Naive thymus-derived CD4-positive, alpha-beta T cell (primary cell): ENCODE measurements at regions of chr22 and their contacts with region 1.

Region 1: GRCh38 chr22:30591588-30592359 is at the start of gene PES1:
- DNase-seq: peak; percentile 80 to 98 (median 96)
- ATAC-seq: peak; percentile 99
- H3K4me3 ChIP-seq: peak within 1 kb of the TSS; percentile 85
- H3K4me3 Mint-ChIP-seq: no peak within 1 kb of the TSS
- H3K27ac ChIP-seq: peak within 1 kb of the TSS; percentile 85
- H3K27ac Mint-ChIP-seq: no peak within 1 kb of the TSS
- H3K4me1 ChIP-seq: peaks cover 8 to 12% of the 10 kb centered on the region in 2 donors
- H3K4me1 Mint-ChIP-seq: peaks cover 0 to 12% (median 0%) of the 10 kb centered on the region in 7 donors
- H3K27me3 ChIP-seq: no peaks in the 10 kb centered on the region
- H3K27me3 Mint-ChIP-seq: peaks cover 0 to 23% (median 0%) of the 10 kb centered on the region in 5 donors
- total RNA-seq, gene PES1: 40.6 to 84.2 (median 56.3) TPM

Region 2: GRCh38 chr22:29387921-29388758 is 1203.6 kb before region 1 on chr22 and contains the start of gene AP1B1:
- CTCF ChIA-PET with region 1: no interaction called
- POLR2A ChIA-PET with region 1: no interaction called
- intact Hi-C with region 1: loop called in 1 of 2 experiments (anchors 5 kb)
- DNase-seq: peak; percentile 79 to 96 (median 86)
- ATAC-seq: peak; percentile 98
- H3K4me3 ChIP-seq: peak within 1 kb of the TSS; percentile 87
- H3K4me3 Mint-ChIP-seq: peak within 1 kb of the TSS; percentile 91 to 96 (median 94)
- H3K27ac ChIP-seq: peak within 1 kb of the TSS; percentile 73
- H3K27ac Mint-ChIP-seq: peak within 1 kb of the TSS; percentile 87 to 97 (median 90)
- H3K4me1 ChIP-seq: peaks cover 7 to 13% of the 10 kb centered on the region in 2 donors
- H3K4me1 Mint-ChIP-seq: peaks cover 31 to 51% (median 48%) of the 10 kb centered on the region in 7 donors
- H3K27me3 ChIP-seq: no peaks in the 10 kb centered on the region
- H3K27me3 Mint-ChIP-seq: no peaks in the 10 kb centered on the region
- total RNA-seq, gene AP1B1: 38.5 to 77.7 (median 45.8) TPM

Region 3: DNA sequence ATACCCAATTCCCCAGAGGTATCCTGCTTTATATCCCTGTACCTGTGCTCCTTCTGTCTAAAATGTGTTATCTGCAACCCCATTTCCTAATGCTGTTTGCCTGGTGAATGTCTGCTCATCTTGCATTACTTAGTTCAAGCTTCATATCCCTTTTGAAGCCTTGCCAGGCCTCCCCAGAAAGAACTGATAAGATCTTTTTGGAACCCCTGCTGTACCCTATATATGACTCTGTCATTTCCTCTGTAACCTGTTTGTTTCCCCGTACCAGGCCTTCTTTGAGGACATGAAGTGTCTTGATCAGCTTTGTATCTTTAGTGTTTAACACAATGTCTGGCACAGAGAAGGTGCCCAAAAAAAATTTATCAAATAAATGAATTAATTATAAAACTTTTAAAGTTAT is 422.8 kb before region 1 on chr22:
- CTCF ChIA-PET with region 1: no interaction called
- POLR2A ChIA-PET with region 1: no interaction called
- intact Hi-C with region 1: no loop called
- DNase-seq: peak in 7 of 9 donors; percentile 28 to 72 (median 56)
- ATAC-seq: peak; percentile 65
- H3K4me3 ChIP-seq: no peak overlapping the region
- H3K4me3 Mint-ChIP-seq: no peak overlapping the region
- H3K27ac ChIP-seq: no peak overlapping the region
- H3K27ac Mint-ChIP-seq: no peak overlapping the region
- H3K4me1 ChIP-seq: peaks cover 0 to 28% of the 10 kb centered on the region in 2 donors
- H3K4me1 Mint-ChIP-seq: peaks cover 0 to 23% (median 0%) of the 10 kb centered on the region in 7 donors
- H3K27me3 ChIP-seq: no peaks in the 10 kb centered on the region
- H3K27me3 Mint-ChIP-seq: no peaks in the 10 kb centered on the region

Region 4: GRCh38 chr22:30305519-30305905 is 286.3 kb before region 1 on chr22:
- CTCF ChIA-PET with region 1: no interaction called
- POLR2A ChIA-PET with region 1: no interaction called
- intact Hi-C with region 1: loop called in 1 of 2 experiments (anchors 5 kb)
- DNase-seq: peak in 8 of 9 donors; percentile 56 to 75 (median 68)
- ATAC-seq: peak; percentile 67
- H3K4me3 ChIP-seq: peak overlapping the region; percentile 51
- H3K4me3 Mint-ChIP-seq: peak overlapping the region; percentile 69 to 97 (median 84)
- H3K27ac ChIP-seq: peak overlapping the region; percentile 75
- H3K27ac Mint-ChIP-seq: peak overlapping the region; percentile 87 to 99 (median 97)
- H3K4me1 ChIP-seq: peaks cover 96 to 98% of the 10 kb centered on the region in 2 donors
- H3K4me1 Mint-ChIP-seq: peaks cover 82 to 100% (median 93%) of the 10 kb centered on the region in 7 donors
- H3K27me3 ChIP-seq: no peaks in the 10 kb centered on the region
- H3K27me3 Mint-ChIP-seq: no peaks in the 10 kb centered on the region

Region 5: DNA sequence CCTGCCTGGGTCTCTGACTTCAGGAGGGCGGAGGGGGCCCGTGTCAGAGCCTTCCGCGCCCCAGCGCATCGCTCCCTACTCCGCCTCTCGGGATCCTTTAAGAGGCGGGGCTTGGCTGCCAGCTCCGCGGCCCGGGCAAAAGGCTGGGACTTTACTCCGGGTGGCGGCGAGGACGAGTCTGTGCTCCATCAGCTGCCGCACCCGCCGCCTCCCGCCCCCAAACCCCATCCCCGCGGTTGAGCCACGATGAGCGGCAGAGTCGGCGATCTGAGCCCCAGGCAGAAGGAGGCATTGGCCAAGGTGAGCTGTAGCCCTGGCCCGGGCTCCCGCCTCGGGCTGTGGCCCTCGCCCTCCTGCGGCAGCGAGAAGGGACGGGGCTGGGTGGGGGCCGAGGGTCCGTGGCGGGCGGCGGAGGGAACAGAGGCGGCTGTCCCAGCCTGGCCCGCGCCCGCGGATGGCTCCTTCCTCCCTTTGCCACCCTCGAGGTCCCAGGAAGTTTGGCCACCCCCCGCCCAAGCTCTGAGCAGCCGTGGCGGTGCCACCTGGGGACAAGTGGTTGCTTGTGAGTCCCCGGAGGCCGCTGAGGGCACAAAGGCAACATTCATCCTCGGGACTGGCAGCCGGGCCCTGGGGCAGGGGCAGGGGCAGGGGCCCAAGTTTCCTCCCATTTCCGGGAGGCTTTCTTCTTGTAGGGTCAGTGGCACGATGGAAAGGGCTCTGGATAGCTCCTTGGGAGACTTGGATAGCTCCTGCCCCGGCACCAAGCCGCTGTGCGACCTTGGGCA is 194.7 kb before region 1 on chr22 and contains the start of gene SEC14L2:
- CTCF ChIA-PET with region 1: no interaction called
- POLR2A ChIA-PET with region 1: no interaction called
- intact Hi-C with region 1: no loop called
- DNase-seq: peak; percentile 26 to 73 (median 50)
- ATAC-seq: peak; percentile 81
- H3K4me3 ChIP-seq: peak within 1 kb of the TSS; percentile 71
- H3K4me3 Mint-ChIP-seq: peak within 1 kb of the TSS; percentile 85 to 95 (median 90)
- H3K27ac ChIP-seq: peak within 1 kb of the TSS; percentile 77
- H3K27ac Mint-ChIP-seq: peak within 1 kb of the TSS; percentile 77 to 94 (median 91)
- H3K4me1 ChIP-seq: peaks cover 12 to 22% of the 10 kb centered on the region in 2 donors
- H3K4me1 Mint-ChIP-seq: peaks cover 29 to 69% (median 46%) of the 10 kb centered on the region in 7 donors
- H3K27me3 ChIP-seq: no peaks in the 10 kb centered on the region
- H3K27me3 Mint-ChIP-seq: peaks cover 0 to 5% (median 0%) of the 10 kb centered on the region in 5 donors
- total RNA-seq, gene SEC14L2: 10.7 to 147 (median 16.5) TPM

Region 6: GRCh38 chr22:30490399-30490798 is 101.4 kb before region 1 on chr22:
- CTCF ChIA-PET with region 1: no interaction called
- POLR2A ChIA-PET with region 1: no interaction called
- intact Hi-C with region 1: no loop called
- DNase-seq: no peak
- ATAC-seq: no peak
- H3K4me3 ChIP-seq: no peak overlapping the region
- H3K4me3 Mint-ChIP-seq: no peak overlapping the region
- H3K27ac ChIP-seq: no peak overlapping the region
- H3K27ac Mint-ChIP-seq: no peak overlapping the region
- H3K4me1 ChIP-seq: no peaks in the 10 kb centered on the region
- H3K4me1 Mint-ChIP-seq: no peaks in the 10 kb centered on the region
- H3K27me3 ChIP-seq: no peaks in the 10 kb centered on the region
- H3K27me3 Mint-ChIP-seq: peaks cover 0 to 8% (median 4%) of the 10 kb centered on the region in 5 donors

Region 7: GRCh38 chr22:30634471-30635233 is 42.9 kb after region 1 on chr22:
- CTCF ChIA-PET with region 1: interaction called, 3 read pairs
- POLR2A ChIA-PET with region 1: interaction called, 7 read pairs
- intact Hi-C with region 1: loop called (anchors 1 kb)
- DNase-seq: peak; percentile 79 to 91 (median 88)
- ATAC-seq: peak; percentile 76
- H3K4me3 ChIP-seq: peak overlapping the region; percentile 77
- H3K4me3 Mint-ChIP-seq: peak overlapping the region; percentile 77 to 92 (median 83)
- H3K27ac ChIP-seq: peak overlapping the region; percentile 70
- H3K27ac Mint-ChIP-seq: peak overlapping the region; percentile 75 to 93 (median 85)
- H3K4me1 ChIP-seq: peaks cover 18 to 27% of the 10 kb centered on the region in 2 donors
- H3K4me1 Mint-ChIP-seq: peaks cover 13 to 25% (median 23%) of the 10 kb centered on the region in 7 donors
- H3K27me3 ChIP-seq: no peaks in the 10 kb centered on the region
- H3K27me3 Mint-ChIP-seq: no peaks in the 10 kb centered on the region

Region 8: GRCh38 chr22:31080848-31081649 is 489.3 kb after region 1 on chr22 and contains the start of gene SMTN:
- CTCF ChIA-PET with region 1: no interaction called
- POLR2A ChIA-PET with region 1: no interaction called
- intact Hi-C with region 1: loop called in 1 of 2 experiments (anchors 2 kb)
- DNase-seq: peak; percentile 75 to 90 (median 84)
- ATAC-seq: peak; percentile 83
- H3K4me3 ChIP-seq: peak within 1 kb of the TSS; percentile 84
- H3K4me3 Mint-ChIP-seq: peak within 1 kb of the TSS; percentile 83 to 93 (median 88)
- H3K27ac ChIP-seq: peak within 1 kb of the TSS; percentile 43
- H3K27ac Mint-ChIP-seq: peak within 1 kb of the TSS in 8 of 9 donors; percentile 35 to 78 (median 68)
- H3K4me1 ChIP-seq: peaks cover 13 to 39% of the 10 kb centered on the region in 2 donors
- H3K4me1 Mint-ChIP-seq: peaks cover 26 to 43% (median 38%) of the 10 kb centered on the region in 7 donors
- H3K27me3 ChIP-seq: no peaks in the 10 kb centered on the region
- H3K27me3 Mint-ChIP-seq: no peaks in the 10 kb centered on the region
- total RNA-seq, gene SMTN: 3.1 to 14.9 (median 6.2) TPM

Region 9: DNA sequence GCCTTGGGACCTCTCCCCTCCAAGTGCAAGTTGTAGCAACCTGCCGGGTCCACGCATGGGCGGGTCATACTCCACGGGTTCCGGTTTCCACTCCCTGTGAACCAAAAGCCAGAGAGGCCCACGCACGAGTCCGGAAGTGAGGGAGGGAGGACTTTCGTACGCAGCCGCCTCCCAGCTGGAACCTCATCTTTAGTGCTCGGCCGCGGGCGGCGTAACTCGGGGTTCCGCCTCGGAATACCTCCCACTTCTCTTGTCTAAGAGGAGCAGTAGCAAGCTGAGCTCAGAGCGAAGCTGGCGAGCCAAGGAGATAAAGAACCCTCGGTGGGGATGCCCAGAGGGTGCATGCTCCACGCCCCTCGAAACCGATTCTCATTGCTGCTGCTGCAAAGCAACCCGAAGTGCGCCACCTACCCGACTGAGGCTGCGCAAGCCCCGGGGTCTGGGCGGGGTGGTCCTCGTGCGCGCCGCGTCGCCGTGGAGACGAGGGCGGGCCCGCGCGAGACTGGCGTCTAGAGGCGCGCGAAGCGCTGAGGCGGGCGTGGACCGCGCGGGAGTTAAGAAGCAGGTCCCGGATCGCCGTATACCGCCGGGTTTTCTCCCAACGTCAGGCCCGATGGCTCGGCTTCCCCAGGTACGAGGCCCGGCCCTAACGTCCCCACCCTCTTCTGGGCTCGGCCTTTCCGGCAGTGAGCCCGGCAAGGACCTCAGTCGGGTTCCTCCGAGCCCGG is 904.4 kb after region 1 on chr22 and contains the start of gene SFI1:
- CTCF ChIA-PET with region 1: no interaction called
- POLR2A ChIA-PET with region 1: no interaction called
- intact Hi-C with region 1: loop called in 1 of 2 experiments (anchors 1 kb)
- DNase-seq: peak; percentile 91 to 98 (median 96)
- ATAC-seq: peak; percentile 93
- H3K4me3 ChIP-seq: peak within 1 kb of the TSS; percentile 83
- H3K4me3 Mint-ChIP-seq: peak within 1 kb of the TSS; percentile 85 to 99 (median 96)
- H3K27ac ChIP-seq: peak within 1 kb of the TSS; percentile 92
- H3K27ac Mint-ChIP-seq: peak within 1 kb of the TSS; percentile 92 to 99 (median 98)
- H3K4me1 ChIP-seq: peaks cover 18 to 20% of the 10 kb centered on the region in 2 donors
- H3K4me1 Mint-ChIP-seq: peaks cover 7 to 50% (median 43%) of the 10 kb centered on the region in 7 donors
- H3K27me3 ChIP-seq: no peaks in the 10 kb centered on the region
- H3K27me3 Mint-ChIP-seq: no peaks in the 10 kb centered on the region
- total RNA-seq, gene SFI1: 196 to 359 (median 343) TPM